ENCODE measurements at regions of chr3 and their contacts with region 1.

Region 1: GRCh38 chr3:140863580-140864009 is 78.0 kb upstream of the SLC25A36 start:
- DNase-seq: peak; percentile 44
- ATAC-seq: peak; percentile 88
- H3K4me3 ChIP-seq: no peak overlapping the region
- H3K27ac ChIP-seq: no peak overlapping the region
- H3K4me1 ChIP-seq: no peaks in the 10 kb centered on the region
- H3K27me3 ChIP-seq: no peaks in the 10 kb centered on the region; a peak in 1 of 4 replicates
- CTCF ChIP-seq: peak; percentile 33 to 66 (median 34); a peak in 5 of 6 replicates
- EP300 ChIP-seq: no peak
- POLR2A ChIP-seq: no peak
- RAD21 ChIP-seq: peak; percentile 86

Region 2: DNA sequence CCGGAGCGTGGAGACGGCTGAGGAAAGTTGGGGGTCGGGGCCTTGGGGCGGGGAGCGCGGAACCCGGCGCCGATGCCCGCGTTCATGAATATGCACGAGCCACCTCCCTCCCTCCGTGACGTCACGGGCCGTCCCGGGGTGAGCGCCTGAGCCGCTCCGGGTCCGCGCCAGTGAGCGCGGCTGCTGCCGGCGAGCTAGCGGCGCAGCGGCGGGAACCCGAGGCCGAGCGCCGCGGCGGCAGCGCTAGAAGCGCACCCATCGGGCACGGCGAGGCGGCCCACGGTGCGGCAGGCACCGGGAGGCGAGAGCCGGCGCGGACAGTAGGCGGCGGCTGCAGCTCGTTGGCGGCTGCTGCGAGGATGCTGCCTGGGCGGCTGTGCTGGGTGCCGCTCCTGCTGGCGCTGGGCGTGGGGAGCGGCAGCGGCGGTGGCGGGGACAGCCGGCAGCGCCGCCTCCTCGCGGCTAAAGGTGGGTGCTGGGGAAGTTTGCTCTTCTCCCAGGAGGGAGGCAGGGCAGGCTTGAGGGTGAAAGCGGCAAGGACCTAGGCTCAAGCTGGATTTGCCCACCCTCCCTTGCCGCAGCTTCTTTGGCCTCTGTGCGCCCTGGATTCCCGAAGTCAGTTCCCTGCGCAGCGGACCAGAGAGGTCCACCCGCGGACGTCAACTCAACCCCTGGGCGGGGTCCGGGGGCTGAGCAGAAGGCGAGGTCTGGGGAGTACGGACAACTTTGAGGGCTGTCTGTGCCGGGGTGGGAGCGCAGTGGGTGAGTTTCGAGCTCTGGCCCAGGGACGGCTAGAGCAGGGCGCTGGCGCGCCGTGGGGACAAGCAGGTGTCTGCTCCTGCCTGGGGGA is 928.4 kb before region 1 on chr3 and contains the start of gene CLSTN2:
- CTCF ChIA-PET with region 1: interaction called, 3 read pairs
- POLR2A ChIA-PET with region 1: no interaction called
- RAD21 ChIA-PET with region 1: no interaction called
- SMC1A ChIA-PET with region 1: interaction called, 9 read pairs
- in situ Hi-C with region 1: loop called (anchors 25 kb)
- intact Hi-C with region 1: loop called (anchors 10 kb)
- DNase-seq: no peak
- ATAC-seq: peak; percentile 51
- H3K4me3 ChIP-seq: no peak within 1 kb of the TSS
- H3K27ac ChIP-seq: no peak within 1 kb of the TSS
- H3K4me1 ChIP-seq: no peaks in the 10 kb centered on the region
- H3K27me3 ChIP-seq: peaks cover 7% of the 10 kb centered on the region in 2 experiments; a peak in 3 of 4 replicates
- CTCF ChIP-seq: no peak
- EP300 ChIP-seq: no peak
- POLR2A ChIP-seq: no peak
- RAD21 ChIP-seq: no peak
- polyA plus RNA-seq, gene CLSTN2: under 0.01 to 0.10 TPM

Region 3: GRCh38 chr3:140276703-140277102 is 586.9 kb before region 1 on chr3:
- CTCF ChIA-PET with region 1: interaction called, 3 read pairs
- POLR2A ChIA-PET with region 1: no interaction called
- RAD21 ChIA-PET with region 1: interaction called, 3 read pairs
- SMC1A ChIA-PET with region 1: no interaction called
- in situ Hi-C with region 1: no loop called
- intact Hi-C with region 1: loop called (anchors 5 kb)
- DNase-seq: no peak
- ATAC-seq: peak; percentile 69
- H3K4me3 ChIP-seq: no peak overlapping the region
- H3K27ac ChIP-seq: no peak overlapping the region
- H3K4me1 ChIP-seq: no peaks in the 10 kb centered on the region
- H3K27me3 ChIP-seq: peaks cover 0 to 8% of the 10 kb centered on the region in 2 experiments; a peak in 2 of 4 replicates
- CTCF ChIP-seq: peak; percentile 43 to 49 (median 44); a peak in 4 of 6 replicates
- EP300 ChIP-seq: no peak
- POLR2A ChIP-seq: no peak
- RAD21 ChIP-seq: peak; percentile 32; the same call in 1 of the 2 replicates

Region 4: DNA sequence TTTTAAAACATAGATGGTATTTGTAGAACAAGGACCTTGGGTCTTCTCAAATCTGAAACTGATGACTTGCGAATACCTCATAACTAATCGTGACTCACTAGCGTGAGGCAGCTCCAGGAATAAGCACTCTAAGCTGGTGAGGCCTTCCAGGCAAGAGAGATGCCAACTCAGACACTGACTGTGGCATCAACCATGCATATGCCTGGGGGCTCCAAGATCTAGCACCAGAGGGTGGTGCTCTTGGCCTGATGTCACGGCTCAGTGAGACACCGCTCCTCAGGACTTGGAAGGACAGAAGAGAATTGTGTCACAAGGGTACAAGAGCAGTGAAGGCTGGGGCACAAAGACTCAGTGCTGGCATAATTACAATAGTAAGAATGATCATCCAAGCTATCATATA is 310.7 kb before region 1 on chr3:
- CTCF ChIA-PET with region 1: interaction called, 7 read pairs
- POLR2A ChIA-PET with region 1: no interaction called
- RAD21 ChIA-PET with region 1: interaction called, 3 read pairs
- SMC1A ChIA-PET with region 1: interaction called, 4 read pairs
- in situ Hi-C with region 1: no loop called
- intact Hi-C with region 1: loop called (anchors 10 kb)
- DNase-seq: no peak
- ATAC-seq: no peak
- H3K4me3 ChIP-seq: no peak overlapping the region
- H3K27ac ChIP-seq: no peak overlapping the region
- H3K4me1 ChIP-seq: no peaks in the 10 kb centered on the region
- H3K27me3 ChIP-seq: no peaks in the 10 kb centered on the region; a peak in 1 of 4 replicates
- CTCF ChIP-seq: peak in 1 of 3 experiments; percentile 10; a peak in 1 of 6 replicates
- EP300 ChIP-seq: no peak
- POLR2A ChIP-seq: no peak
- RAD21 ChIP-seq: no peak

Region 5: DNA sequence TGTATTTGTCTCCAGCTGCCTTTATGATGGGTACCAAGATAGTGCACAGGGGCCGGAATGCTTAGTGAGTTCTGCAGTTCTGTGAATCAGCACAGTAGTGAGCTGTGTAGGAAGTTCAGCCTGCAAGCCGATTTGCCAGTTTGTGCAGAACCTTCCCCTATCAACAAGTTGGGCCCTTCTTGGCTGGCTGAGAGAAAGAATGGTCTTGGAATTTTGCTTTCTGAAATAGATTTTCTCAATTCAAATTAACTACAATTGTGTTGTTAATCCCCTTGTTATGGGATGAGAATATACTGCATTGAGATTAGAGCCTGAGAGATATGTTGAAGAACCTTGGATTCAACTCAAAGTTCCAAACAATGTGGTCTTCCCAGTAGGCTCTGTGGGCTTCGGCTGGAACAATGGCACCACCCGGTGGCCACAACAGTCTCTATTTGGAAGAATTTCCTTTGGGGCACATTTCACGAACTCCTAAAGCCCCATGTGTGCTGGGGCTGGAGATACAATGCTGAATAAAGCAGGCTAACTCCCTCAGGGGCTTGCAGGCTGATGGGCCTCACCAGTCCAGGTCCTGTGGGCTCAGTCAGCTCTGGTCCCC is 126.6 kb before region 1 on chr3:
- CTCF ChIA-PET with region 1: interaction called, 8 read pairs
- POLR2A ChIA-PET with region 1: no interaction called
- RAD21 ChIA-PET with region 1: no interaction called
- SMC1A ChIA-PET with region 1: interaction called, 4 read pairs
- in situ Hi-C with region 1: no loop called
- intact Hi-C with region 1: loop called (anchors 1 kb)
- DNase-seq: no peak
- ATAC-seq: peak; percentile 83
- H3K4me3 ChIP-seq: no peak overlapping the region
- H3K27ac ChIP-seq: no peak overlapping the region
- H3K4me1 ChIP-seq: no peaks in the 10 kb centered on the region
- H3K27me3 ChIP-seq: peaks cover 0 to 6% of the 10 kb centered on the region in 2 experiments; a peak in 2 of 4 replicates
- CTCF ChIP-seq: peak; percentile 33 to 67 (median 45); a peak in 4 of 6 replicates
- EP300 ChIP-seq: no peak
- POLR2A ChIP-seq: no peak
- RAD21 ChIP-seq: peak; percentile 64

Region 6: DNA sequence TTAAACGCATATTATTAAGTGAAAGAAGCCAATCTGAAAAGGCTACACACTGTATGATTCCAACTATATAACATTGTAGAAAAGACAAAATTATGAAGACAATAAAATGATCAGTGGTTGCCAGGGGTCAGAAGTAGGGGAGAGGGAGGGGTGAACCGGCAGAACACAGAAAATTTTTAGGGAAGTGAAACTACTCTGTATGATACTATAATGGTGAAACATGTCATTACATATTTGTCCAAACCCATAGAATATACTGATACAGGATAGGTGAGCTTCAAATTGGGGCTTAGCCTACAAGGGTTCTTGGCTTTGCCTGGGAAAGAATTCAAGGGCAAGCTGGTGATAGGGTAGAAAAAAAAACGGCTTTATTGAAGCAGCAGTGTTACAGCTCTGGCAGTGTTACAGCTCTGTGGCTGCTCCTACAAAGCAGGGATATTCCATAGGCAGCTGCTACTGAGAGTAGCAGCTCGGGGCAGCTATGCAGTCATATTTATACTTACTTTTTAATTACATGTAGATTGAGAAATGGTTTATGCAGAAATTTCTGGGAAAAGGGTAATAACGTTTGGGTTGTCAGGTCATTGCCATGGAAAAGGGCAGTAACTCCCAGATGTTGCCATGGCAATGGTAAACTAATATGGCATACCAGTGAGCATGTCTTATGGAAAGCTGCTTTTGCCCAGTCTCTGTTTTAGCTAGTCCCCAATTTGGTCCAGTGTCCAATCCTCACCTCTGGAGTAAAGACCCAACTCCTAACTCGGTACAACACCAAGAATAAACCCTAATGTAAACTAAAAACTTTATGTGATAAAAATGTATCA is 47.0 kb before region 1 on chr3:
- CTCF ChIA-PET with region 1: interaction called, 4 read pairs
- POLR2A ChIA-PET with region 1: no interaction called
- RAD21 ChIA-PET with region 1: no interaction called
- SMC1A ChIA-PET with region 1: no interaction called
- in situ Hi-C with region 1: no loop called
- intact Hi-C with region 1: loop called (anchors 2 kb)
- DNase-seq: peak; percentile 32
- ATAC-seq: peak; percentile 100
- H3K4me3 ChIP-seq: no peak overlapping the region
- H3K27ac ChIP-seq: no peak overlapping the region
- H3K4me1 ChIP-seq: no peaks in the 10 kb centered on the region
- H3K27me3 ChIP-seq: no peaks in the 10 kb centered on the region
- CTCF ChIP-seq: no peak
- EP300 ChIP-seq: peak in 1 of 2 experiments; percentile 40; a peak in 1 of 4 replicates
- POLR2A ChIP-seq: no peak
- RAD21 ChIP-seq: no peak

Measured in GM12878 (cell line).